Cardiac septum (tissue), 1 donor: ENCODE measurements at regions of chr2 and their contacts with region 1.

Region 1: GRCh38 chr2:237291138-237291792 is 122.7 kb downstream of the COL6A3 start:
- DNase-seq: peak; percentile 95

Region 2: DNA sequence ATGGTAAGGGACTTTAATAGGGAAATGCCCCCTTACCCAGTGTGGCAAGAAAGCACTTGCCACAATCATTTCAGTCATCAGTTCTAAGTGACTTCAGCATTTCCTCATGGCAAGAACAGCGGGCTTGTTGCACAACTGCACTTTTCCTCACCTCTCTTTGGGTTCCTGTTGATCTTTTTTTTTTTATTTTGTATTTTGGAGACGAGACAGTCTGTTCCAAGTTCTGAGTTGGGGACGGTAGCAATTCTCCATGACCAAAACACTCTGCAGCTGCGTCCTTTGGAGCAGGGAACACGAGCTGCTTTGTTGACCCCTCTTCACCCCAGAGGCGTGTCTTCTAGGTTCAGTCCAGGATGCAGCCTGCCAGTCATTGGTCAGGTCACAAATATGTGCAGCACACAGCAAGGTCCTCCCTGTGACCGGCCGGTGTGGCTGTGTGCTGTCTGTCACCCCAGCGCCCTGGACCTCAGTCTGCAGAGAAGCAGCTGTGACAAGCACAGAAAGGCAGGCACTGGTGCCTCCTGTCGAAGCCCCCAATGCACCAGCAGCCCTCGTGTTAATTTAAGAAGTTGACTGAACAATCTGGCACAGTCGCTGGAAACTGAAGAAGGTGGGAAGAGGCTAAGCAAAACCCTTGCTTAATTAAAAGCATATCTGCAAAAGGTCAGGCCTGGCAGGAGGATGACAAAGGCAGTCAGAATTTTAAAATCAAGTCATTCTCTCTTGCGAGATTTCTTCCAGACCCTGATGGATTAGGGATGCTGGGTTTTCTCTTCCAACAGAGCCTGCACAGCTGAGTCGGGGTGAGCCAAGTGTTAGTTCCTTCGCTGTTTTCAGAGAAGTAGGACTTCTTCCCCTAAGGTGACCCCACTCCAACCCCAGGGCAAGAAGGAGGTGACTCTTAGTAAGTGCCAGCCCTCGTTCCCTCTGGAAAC is 302.3 kb before region 1 on chr2:
- intact Hi-C with region 1: no loop called
- DNase-seq: no peak

Region 3: DNA sequence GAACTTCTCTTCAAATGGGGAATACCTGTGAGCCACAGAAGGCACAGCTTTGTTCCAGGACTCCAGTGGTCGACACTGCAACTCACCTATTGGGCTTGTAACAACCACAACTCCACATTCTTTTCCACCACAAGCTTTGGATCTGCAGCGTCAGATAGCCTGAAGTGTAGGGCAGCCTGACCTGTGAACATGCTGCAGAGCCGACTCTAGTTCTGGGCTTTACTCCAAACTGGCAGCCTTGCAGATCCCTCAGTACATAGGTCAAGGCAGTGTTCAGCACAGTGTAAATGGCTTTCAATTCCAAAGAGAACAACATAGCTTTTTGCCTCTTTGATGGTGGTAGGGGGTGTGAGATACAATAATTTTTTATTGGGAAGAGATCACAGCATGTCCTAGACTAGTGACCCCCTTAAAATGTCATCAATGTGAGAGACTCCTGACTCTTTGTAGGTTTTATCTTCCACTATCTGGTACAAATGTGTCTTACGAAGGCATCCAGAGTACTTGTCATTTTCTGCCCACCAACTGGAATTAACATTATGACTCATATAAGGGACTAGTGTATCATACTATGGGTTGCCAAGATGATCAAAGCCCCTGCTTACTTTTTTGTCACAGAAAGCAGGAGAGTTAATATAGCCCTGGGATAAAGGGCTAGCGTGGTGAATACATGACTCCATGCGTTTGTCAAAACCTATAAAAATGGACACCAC is 55.7 kb before region 1 on chr2:
- intact Hi-C with region 1: no loop called
- DNase-seq: peak; percentile 80

Region 4: DNA sequence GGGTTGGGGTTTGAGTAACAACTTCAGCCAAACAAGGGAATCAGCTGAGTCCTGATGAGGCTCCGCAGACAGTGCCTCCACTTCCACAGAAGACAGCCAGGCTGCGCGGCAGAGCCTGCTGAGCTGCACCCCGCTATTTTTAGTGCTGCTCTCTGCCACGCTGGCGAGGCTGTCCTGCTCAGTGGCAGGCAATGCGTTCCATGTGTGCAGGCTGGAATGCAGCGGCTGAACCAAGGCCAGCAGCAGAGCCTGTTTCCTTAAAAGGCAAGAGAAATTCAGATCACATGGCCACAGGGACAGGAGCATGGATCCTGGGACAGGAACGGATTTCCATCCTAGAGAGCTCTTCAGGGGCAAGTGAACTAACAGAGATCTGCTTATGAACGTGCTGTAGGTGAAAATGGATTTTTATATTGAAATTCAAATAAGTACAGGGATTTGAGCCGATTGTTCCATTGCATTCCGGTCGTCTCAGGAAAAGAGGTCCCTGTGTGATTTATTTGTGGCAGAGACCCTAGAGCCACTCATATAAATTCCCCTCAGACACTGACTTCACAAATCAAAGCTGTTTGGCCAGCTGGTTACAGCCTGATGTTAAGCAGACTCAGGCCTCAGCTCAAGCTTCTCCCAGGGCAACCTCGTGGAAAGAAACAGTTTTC is 24.0 kb after region 1 on chr2:
- intact Hi-C with region 1: loop called (anchors 1 kb)
- DNase-seq: peak; percentile 94

Region 5: DNA sequence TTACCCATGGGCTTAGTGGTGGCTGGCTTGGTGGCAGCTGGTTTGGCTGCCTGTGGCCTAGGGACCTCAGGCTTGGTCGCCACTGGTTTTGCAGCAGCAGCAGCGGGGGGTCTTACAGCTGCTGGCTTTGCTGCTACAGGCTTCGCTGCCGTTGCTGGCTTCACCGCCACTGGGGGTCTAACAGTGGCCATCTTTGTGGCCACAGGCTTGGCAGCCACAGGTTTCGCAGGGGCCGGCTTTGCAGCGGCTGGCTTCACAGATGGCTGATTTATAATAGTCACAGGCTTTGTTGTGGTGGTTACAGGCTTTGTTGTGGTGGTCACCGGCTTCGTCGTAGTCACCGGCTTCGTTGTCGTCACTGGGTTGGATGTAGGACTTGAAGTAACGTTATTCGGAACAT is 44.9 kb after region 1 on chr2:
- intact Hi-C with region 1: no loop called
- DNase-seq: no peak

Region 6: GRCh38 chr2:237383991-237384671 is 92.9 kb after region 1 on chr2:
- intact Hi-C with region 1: no loop called
- DNase-seq: no peak